Spleen (tissue), 13 donors: ENCODE measurements at regions of chr4 and their contacts with region 1.

Region 1: GRCh38 chr4:77734928-77735327 is 84.2 kb downstream of the CNOT6L start:
- DNase-seq: no peak
- H3K4me3 ChIP-seq: peak overlapping the region in 1 of 8 donors; percentile 26
- H3K27ac ChIP-seq: peak overlapping the region in 4 of 8 donors; percentile 11 to 54 (median 22)
- H3K4me1 ChIP-seq: peaks cover 0 to 75% (median 31%) of the 10 kb centered on the region in 6 donors
- H3K27me3 ChIP-seq: no peaks in the 10 kb centered on the region
- CTCF ChIP-seq: no peak
- POLR2A ChIP-seq: no peak

Region 2: DNA sequence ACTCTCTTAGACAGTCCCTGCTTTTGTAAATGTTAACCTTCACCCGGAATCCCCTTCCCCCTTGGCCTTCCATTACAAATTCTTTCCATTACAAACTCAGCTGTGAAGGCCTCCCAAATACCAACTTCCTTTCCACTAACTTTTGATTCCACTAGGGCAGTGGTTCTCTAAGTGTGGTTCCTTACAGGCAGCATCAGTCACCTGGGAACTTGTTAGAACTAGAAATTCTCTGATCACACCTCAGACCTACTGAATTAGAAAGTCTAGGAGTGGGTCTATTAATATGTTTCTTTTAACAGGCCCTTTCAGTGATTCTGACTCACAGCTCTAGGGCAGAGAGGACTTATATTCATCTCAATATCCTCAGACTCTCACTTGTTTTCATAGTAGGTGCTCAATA is 108.7 kb after region 1 on chr4:
- intact Hi-C with region 1: no loop called
- DNase-seq: no peak
- H3K4me3 ChIP-seq: no peak overlapping the region
- H3K27ac ChIP-seq: peak overlapping the region in 7 of 8 donors; percentile 51 to 81 (median 70)
- H3K4me1 ChIP-seq: no peaks in the 10 kb centered on the region
- H3K27me3 ChIP-seq: no peaks in the 10 kb centered on the region
- CTCF ChIP-seq: no peak
- POLR2A ChIP-seq: no peak

Region 3: GRCh38 chr4:77877190-77877589 is 142.3 kb after region 1 on chr4:
- intact Hi-C with region 1: loop called (anchors 10 kb)
- DNase-seq: no peak
- H3K4me3 ChIP-seq: no peak overlapping the region
- H3K27ac ChIP-seq: no peak overlapping the region
- H3K4me1 ChIP-seq: peaks cover 0 to 12% (median 0%) of the 10 kb centered on the region in 6 donors
- H3K27me3 ChIP-seq: no peaks in the 10 kb centered on the region
- CTCF ChIP-seq: no peak
- POLR2A ChIP-seq: no peak